ENCODE measurements at regions of chr5 and their contacts with region 1.

Region 1: GRCh38 chr5:157471709-157472108 is 11.7 kb downstream of the NIPAL4 start:
- DNase-seq: peak; percentile 61
- H3K4me3 ChIP-seq: no peak overlapping the region
- H3K27ac ChIP-seq: no peak overlapping the region
- H3K4me1 ChIP-seq: no peaks in the 10 kb centered on the region
- CTCF ChIP-seq: peak; percentile 88

Region 2: DNA sequence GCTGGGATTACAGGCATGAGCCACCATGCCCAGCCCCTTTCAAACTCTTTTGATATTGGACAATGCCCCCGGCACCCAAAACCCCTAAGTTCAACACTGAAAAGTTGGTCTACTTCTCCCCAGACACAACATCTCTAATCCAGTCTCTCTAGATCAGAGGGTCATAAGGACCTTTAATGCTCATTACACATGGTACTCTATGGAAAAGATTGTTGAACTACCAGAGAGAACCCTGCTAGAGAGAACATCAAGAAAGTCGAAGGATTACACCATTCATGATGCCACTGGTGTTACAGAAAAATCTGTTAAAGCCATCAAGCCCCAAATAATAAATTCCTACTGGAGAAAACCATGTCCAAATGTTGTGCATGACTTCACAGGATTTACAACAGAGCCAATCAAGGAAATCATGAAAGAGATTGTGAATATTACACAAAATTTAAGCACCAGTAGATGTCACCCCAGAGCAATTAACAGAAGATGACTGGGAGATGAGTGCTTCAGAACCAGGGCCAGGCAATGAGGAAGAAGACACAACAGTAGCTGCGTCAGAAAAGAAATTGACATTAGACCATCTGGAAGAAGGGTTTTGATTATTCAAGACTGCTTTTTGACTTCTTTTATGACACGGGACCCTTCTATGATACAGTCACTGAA is 40.0 kb before region 1 on chr5:
- CTCF ChIA-PET with region 1: no interaction called
- POLR2A ChIA-PET with region 1: interaction called, 7 read pairs
- intact Hi-C with region 1: loop called (anchors 1 kb)
- DNase-seq: peak; percentile 82
- H3K4me3 ChIP-seq: no peak overlapping the region
- H3K27ac ChIP-seq: no peak overlapping the region
- H3K4me1 ChIP-seq: peaks cover 9% of the 10 kb centered on the region
- CTCF ChIP-seq: peak; percentile 87

Region 3: GRCh38 chr5:157659868-157660660 is 188.4 kb after region 1 on chr5:
- CTCF ChIA-PET with region 1: no interaction called
- POLR2A ChIA-PET with region 1: no interaction called
- intact Hi-C with region 1: no loop called
- DNase-seq: no peak
- H3K4me3 ChIP-seq: no peak overlapping the region
- H3K27ac ChIP-seq: no peak overlapping the region
- H3K4me1 ChIP-seq: no peaks in the 10 kb centered on the region
- CTCF ChIP-seq: no peak

Measured in OCI-LY7 (cell line).